SK-N-SH (cell line): ENCODE measurements at regions of chr2 and their contacts with region 1.

Region 1: GRCh38 chr2:60674524-60675165 is 81.4 kb upstream of the PAPOLG start:
- DNase-seq: peak; percentile 87
- H3K4me3 ChIP-seq: no peak overlapping the region; a peak in 1 of 4 replicates
- H3K27ac ChIP-seq: no peak overlapping the region
- H3K4me1 ChIP-seq: no peaks in the 10 kb centered on the region; a peak in 1 of 4 replicates
- H3K27me3 ChIP-seq: no peaks in the 10 kb centered on the region; the same call in 1 of the 2 replicates
- CTCF ChIP-seq: peak; percentile 86
- EP300 ChIP-seq: no peak
- RAD21 ChIP-seq: peak; percentile 76

Region 2: DNA sequence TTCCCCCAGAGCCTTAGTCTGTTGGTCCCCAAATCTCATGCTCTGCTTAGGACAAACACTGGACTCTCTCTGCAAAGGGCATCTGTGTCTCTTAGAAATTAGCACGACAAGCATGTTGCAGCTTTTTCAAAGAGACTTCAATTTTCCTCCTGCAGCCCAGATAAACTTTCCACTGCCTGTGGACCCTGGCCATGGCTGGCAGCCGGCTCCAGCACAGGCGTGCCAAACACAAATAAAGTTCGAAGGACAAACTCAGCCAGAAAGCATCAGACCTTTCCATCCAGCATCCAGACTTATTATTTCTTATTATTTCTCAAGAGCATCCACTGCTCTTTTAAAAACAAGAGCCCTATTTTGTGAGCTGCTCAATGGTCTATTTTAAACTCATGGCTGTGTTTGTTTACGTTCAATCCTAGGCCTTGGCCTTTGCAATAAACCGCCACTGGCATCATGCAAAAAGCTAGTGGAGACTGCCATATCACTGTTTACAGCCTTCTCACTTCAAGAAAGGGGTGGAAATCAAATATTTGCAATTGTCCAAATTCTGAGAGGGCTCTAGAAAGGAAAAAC is 422.0 kb before region 1 on chr2:
- CTCF ChIA-PET with region 1: no interaction called
- POLR2A ChIA-PET with region 1: no interaction called
- DNase-seq: no peak
- H3K4me3 ChIP-seq: no peak overlapping the region
- H3K27ac ChIP-seq: no peak overlapping the region
- H3K4me1 ChIP-seq: no peaks in the 10 kb centered on the region
- H3K27me3 ChIP-seq: no peaks in the 10 kb centered on the region
- CTCF ChIP-seq: no peak
- EP300 ChIP-seq: no peak
- RAD21 ChIP-seq: no peak

Region 3: DNA sequence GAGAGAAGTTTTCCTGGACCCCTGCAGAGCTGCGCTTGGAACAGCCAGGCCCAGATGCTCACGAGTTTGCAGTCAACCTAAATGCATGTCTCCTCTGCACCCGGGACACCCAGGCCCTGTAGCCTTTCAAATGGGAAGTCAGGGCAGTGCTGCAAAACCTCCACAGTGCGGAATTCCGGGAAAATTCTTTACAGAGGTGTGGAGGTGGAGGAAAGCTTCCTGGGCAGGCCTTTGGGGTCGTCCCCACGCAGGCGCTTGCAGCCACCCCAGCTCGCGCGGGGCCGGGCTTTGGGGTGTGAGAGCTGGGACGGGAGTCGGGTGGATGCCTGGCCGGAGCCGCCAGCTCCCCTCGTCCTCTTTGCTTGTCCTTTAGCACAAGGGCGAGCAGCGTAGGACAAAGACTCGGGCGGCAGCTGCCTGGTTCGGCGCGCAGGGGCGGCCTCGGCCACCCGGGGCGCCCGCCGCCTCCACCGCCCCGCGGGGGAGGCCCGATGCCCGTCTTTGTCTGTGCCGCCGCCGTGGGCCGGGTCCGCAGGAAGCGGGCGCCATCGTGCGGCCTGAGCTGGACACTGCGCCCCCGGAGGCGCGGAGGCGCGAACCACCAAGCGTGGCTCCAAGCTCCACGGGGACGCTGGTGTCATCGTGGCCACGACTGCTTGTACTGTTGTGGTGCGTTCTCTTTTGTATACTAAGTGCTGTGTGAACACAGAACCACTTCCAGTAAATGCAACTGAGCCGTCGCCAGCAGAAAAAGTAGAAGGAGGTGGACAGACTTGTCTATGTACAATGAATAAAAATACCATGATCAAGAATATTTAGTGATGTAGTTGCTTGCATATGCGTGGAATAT is 93.0 kb before region 1 on chr2:
- CTCF ChIA-PET with region 1: interaction called, 21 read pairs
- POLR2A ChIA-PET with region 1: no interaction called
- DNase-seq: peak; percentile 95
- H3K4me3 ChIP-seq: peak overlapping the region; percentile 37 to 53; a peak in 3 of 4 replicates
- H3K27ac ChIP-seq: no peak overlapping the region
- H3K4me1 ChIP-seq: no peaks in the 10 kb centered on the region; a peak in 1 of 4 replicates
- H3K27me3 ChIP-seq: no peaks in the 10 kb centered on the region; the same call in 1 of the 2 replicates
- CTCF ChIP-seq: peak; percentile 86
- EP300 ChIP-seq: no peak
- RAD21 ChIP-seq: peak; percentile 83

Region 4: DNA sequence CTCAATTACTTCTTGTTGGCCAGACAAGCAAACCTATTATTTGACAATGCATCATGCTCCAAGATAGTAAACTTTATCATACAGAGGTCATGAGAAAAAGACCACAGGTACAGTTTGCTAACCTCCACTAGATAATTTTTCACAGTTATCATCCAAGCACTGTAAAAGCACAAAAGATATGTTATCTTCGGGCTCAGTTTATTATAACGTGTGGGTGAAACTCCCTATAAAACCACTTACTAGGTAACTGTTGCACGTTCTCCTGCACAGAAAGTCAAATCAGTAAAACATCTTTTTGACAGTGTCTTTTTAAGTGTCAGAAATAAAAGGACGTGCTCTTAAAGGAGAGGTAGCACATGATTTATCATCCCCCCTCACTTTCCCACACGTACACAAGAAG is 26.5 kb before region 1 on chr2:
- CTCF ChIA-PET with region 1: interaction called, 36 read pairs
- POLR2A ChIA-PET with region 1: no interaction called
- DNase-seq: no peak
- H3K4me3 ChIP-seq: no peak overlapping the region
- H3K27ac ChIP-seq: no peak overlapping the region
- H3K4me1 ChIP-seq: peaks cover 0 to 2% of the 10 kb centered on the region in 2 experiments; a peak in 2 of 4 replicates
- H3K27me3 ChIP-seq: no peaks in the 10 kb centered on the region
- CTCF ChIP-seq: no peak
- EP300 ChIP-seq: no peak
- RAD21 ChIP-seq: no peak

Region 5: GRCh38 chr2:60693551-60693950 is 18.9 kb after region 1 on chr2:
- CTCF ChIA-PET with region 1: interaction called, 36 read pairs
- POLR2A ChIA-PET with region 1: interaction called, 3 read pairs
- DNase-seq: no peak
- H3K4me3 ChIP-seq: no peak overlapping the region
- H3K27ac ChIP-seq: no peak overlapping the region
- H3K4me1 ChIP-seq: no peaks in the 10 kb centered on the region
- H3K27me3 ChIP-seq: no peaks in the 10 kb centered on the region
- CTCF ChIP-seq: no peak
- EP300 ChIP-seq: no peak
- RAD21 ChIP-seq: no peak

Region 6: DNA sequence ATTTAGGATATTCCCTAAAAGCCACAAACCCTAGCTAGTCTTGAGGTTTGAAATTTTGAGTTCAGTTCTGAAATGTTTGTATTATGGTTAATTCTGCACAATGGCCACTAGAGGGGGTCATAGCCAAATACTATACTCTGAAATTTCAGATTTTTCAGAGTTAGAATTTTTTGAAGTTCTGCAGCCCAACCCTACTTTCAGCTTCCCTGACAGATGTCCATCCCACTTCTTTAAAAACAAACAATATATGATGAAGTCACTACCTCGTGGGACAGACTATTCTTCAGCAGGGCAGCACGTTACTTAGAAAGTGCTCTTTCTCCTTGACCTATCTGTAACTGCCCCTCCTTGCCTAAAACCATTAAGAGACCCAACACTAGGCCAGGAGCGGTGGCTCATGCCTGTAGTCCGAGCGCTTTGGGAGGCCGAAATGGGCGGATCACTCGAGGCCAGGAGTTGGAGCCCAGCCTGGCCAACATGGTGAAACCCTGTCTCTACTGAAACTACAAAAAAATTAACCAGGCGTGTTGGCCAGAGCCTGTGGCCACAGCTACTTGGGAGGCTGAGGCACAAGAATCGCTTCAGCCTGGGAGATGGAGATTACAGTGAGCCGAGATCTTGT is 33.2 kb after region 1 on chr2:
- CTCF ChIA-PET with region 1: interaction called, 20 read pairs
- POLR2A ChIA-PET with region 1: no interaction called
- DNase-seq: peak; percentile 52
- H3K4me3 ChIP-seq: no peak overlapping the region; a peak in 1 of 4 replicates
- H3K27ac ChIP-seq: no peak overlapping the region
- H3K4me1 ChIP-seq: no peaks in the 10 kb centered on the region
- H3K27me3 ChIP-seq: no peaks in the 10 kb centered on the region
- CTCF ChIP-seq: peak; percentile 86
- EP300 ChIP-seq: no peak
- RAD21 ChIP-seq: peak; percentile 78

Region 7: DNA sequence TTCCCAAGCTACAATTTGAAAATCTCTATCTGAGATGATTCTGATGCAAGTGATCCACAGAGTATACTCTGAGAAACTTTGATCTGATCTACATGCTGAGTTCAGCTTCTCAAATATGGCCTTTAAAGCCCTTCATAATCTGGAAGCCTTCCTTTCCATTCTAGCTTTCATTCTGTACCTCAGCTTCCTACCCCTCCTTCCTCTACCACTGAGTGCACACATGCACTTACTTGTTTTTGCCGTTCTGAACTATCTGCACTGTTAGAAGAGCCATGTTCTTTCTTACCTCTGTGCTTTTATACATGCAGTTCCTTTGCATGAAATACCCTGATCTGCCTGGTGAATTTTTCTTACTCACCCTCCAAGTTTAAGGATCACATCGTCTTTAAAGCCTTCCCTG is 231.8 kb after region 1 on chr2:
- CTCF ChIA-PET with region 1: no interaction called
- POLR2A ChIA-PET with region 1: no interaction called
- DNase-seq: no peak
- H3K4me3 ChIP-seq: no peak overlapping the region
- H3K27ac ChIP-seq: no peak overlapping the region
- H3K4me1 ChIP-seq: no peaks in the 10 kb centered on the region
- H3K27me3 ChIP-seq: no peaks in the 10 kb centered on the region
- CTCF ChIP-seq: no peak
- EP300 ChIP-seq: no peak
- RAD21 ChIP-seq: no peak